ENCODE measurements at regions of chrX and their contacts with region 1.

Region 1: DNA sequence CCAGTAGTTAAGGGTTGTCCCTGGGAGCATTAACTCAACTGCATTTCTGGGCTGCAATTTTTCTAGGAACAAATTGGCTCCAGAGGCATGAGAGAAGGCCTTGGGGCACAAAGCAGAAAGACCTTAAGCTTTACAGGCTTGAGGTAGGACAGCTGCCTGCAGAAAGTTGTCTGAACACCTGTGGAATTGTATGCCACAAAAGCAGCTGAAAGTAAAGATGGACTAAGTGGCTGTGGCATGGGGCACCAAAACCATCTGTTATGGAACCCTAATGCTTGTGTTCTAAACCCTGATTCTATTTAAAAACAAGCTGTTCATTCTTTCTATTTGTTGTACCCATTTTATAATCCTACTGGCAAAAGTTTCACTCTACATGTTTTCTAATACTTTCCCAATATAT is 515.2 kb downstream of the GLUD2 start:
- DNase-seq: no peak
- H3K4me3 ChIP-seq: no peak overlapping the region
- H3K27ac ChIP-seq: no peak overlapping the region
- H3K4me1 ChIP-seq: no peaks in the 10 kb centered on the region
- H3K27me3 ChIP-seq: no peaks in the 10 kb centered on the region
- CTCF ChIP-seq: no peak

Region 2: DNA sequence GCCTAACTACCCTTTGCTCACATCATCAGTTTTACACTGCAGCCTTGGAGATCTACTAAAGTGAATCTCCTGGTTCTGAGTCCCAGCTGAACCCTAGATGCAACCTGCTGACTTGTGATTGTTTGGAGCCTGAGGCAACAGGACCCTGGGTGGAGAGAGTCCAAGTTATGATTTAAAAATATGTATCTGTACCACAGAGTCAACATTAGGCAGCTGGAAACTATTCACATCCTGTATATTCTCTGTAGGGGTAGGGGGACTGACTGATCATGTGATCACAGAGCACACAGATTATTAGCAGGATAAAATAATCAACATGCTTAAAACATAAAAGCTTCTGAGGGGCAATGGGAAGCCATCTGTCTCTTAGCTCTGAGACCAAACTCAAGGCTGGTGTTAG is 739.1 kb before region 1 on chrX:
- intact Hi-C with region 1: no loop called
- DNase-seq: no peak
- H3K4me3 ChIP-seq: no peak overlapping the region
- H3K27ac ChIP-seq: no peak overlapping the region
- H3K4me1 ChIP-seq: no peaks in the 10 kb centered on the region
- H3K27me3 ChIP-seq: no peaks in the 10 kb centered on the region
- CTCF ChIP-seq: no peak

Region 3: GRCh38 chrX:121496966-121497365 is 65.7 kb before region 1 on chrX:
- intact Hi-C with region 1: loop called (anchors 5 kb)
- DNase-seq: no peak
- H3K4me3 ChIP-seq: no peak overlapping the region
- H3K27ac ChIP-seq: no peak overlapping the region
- H3K4me1 ChIP-seq: no peaks in the 10 kb centered on the region
- H3K27me3 ChIP-seq: no peaks in the 10 kb centered on the region
- CTCF ChIP-seq: no peak

Region 4: GRCh38 chrX:121782976-121783375 is 220.4 kb after region 1 on chrX:
- intact Hi-C with region 1: no loop called
- DNase-seq: no peak
- H3K4me3 ChIP-seq: no peak overlapping the region
- H3K27ac ChIP-seq: no peak overlapping the region
- H3K4me1 ChIP-seq: no peaks in the 10 kb centered on the region
- H3K27me3 ChIP-seq: no peaks in the 10 kb centered on the region
- CTCF ChIP-seq: no peak

Region 5: DNA sequence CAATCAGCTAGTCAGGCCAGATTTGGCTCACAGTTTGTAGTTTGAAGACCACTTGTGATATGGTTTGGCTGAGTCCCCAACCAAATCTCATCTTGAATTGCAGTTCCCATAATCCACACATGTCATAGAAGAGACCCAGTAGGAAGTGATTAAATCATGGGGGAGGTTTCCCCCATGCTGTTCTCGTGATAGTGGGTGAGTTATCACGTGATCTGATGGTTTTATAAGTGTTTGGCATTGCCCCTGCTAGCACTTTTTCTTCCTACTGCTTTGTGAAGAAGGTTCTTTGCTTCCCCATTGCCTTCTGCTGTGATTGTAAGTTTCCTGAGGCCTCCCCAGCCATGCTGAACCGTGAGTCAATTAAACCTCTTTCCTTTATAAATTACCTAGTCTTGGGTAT is 620.6 kb after region 1 on chrX:
- intact Hi-C with region 1: no loop called
- DNase-seq: no peak
- H3K4me3 ChIP-seq: no peak overlapping the region
- H3K27ac ChIP-seq: no peak overlapping the region
- H3K4me1 ChIP-seq: no peaks in the 10 kb centered on the region
- H3K27me3 ChIP-seq: no peaks in the 10 kb centered on the region
- CTCF ChIP-seq: no peak

Measured in left ventricle myocardium inferior (tissue), 1 donor.